Cardiac septum (tissue), 1 donor: ENCODE measurements at regions of chr9 and their contacts with region 1.

Region 1: GRCh38 chr9:97615439-97616072 is 17.6 kb downstream of the TSTD2 start:
- DNase-seq: no peak

Region 2: GRCh38 chr9:97411789-97412625 is 203.5 kb before region 1 on chr9 and contains the start of gene TDRD7:
- intact Hi-C with region 1: loop called (anchors 5 kb)
- DNase-seq: peak; percentile 96
- total RNA-seq, gene TDRD7: 8.8 TPM

Region 3: GRCh38 chr9:97468658-97469448 is 146.7 kb before region 1 on chr9:
- intact Hi-C with region 1: loop called (anchors 1 kb)
- DNase-seq: peak; percentile 80

Region 4: DNA sequence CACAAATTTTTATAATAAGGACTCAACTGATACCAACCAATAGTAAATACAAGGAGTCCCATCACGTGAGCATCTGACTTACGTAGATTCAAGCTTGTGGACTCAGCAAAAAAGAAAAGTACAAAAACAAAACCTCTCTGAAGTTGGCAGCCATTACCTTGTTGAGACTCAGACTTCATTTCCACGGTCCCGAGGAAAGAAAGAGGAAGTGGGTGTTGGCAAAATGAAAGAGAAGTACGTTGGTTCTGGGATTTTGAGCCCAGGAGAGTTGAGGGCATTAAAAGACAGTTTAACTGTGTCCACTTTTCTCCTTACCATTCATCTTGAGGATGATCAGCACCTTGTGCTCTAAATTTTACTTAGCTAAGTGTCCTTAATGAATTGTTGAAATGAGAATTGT is 44.8 kb after region 1 on chr9:
- intact Hi-C with region 1: no loop called
- DNase-seq: no peak